ENCODE measurements at regions of chr6 and their contacts with region 1.

Region 1: GRCh38 chr6:84227434-84228197 is at the start of gene CEP162:
- DNase-seq: peak; percentile 92
- H3K4me3 Mint-ChIP-seq: peak within 1 kb of the TSS; percentile 100
- H3K27ac Mint-ChIP-seq: peak within 1 kb of the TSS; percentile 93
- H3K4me1 Mint-ChIP-seq: peaks cover 14% of the 10 kb centered on the region
- H3K27me3 Mint-ChIP-seq: peaks cover 6% of the 10 kb centered on the region
- total RNA-seq, gene CEP162: 5.4 to 6.3 TPM

Region 2: DNA sequence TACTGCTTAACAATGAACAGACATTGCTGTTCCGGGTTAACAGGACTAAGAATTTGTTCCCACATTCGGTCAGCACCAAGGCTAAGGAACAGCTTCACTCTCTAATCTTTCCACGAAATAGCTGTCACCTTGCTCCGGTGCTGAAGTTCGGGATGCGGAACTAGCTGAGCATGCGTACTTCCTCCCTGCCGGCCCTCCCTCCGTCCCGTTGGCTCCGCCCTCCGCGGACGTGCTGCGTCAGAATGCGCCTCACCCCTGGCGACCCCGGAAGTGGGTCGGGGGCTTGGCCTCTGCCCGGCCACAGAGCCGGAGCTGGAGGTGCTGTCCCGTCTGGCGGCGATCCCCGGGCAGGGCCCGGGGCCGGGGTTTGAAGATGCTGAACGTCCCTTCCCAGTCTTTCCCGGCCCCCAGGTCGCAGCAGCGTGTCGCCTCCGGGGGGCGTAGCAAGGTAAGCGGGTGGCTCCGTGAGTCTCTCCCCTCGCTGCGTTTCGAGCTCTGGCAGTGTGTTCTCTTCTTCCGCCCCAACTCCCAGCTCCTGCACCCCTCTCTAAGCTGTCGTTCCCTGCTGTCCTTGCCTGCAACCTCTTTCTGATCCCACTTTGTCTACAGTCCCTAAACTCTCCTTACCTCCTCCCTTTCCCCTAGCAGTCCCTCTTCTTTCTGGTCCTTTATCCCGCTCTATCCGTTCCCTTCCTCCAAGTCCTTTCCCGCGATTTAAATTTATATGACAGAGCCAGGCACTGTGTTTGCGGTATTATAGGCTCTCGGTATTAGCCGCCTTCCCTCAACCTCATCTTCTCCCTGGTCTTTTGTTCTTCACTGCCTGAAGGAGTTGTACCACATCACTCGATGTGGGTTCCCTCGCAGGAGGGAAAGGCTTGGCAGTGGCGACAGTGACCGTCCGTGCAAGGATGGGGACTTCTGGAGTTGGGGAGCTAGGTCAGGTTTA is 367.9 kb before region 1 on chr6 and contains the start of gene CYB5R4:
- CTCF ChIA-PET with region 1: interaction called, 20 read pairs
- POLR2A ChIA-PET with region 1: interaction called, 5 read pairs
- intact Hi-C with region 1: loop called (anchors 1 kb)
- DNase-seq: peak; percentile 97
- H3K4me3 Mint-ChIP-seq: peak within 1 kb of the TSS; percentile 99
- H3K27ac Mint-ChIP-seq: peak within 1 kb of the TSS; percentile 87
- H3K4me1 Mint-ChIP-seq: peaks cover 30% of the 10 kb centered on the region
- H3K27me3 Mint-ChIP-seq: peaks cover 12% of the 10 kb centered on the region
- total RNA-seq, gene CYB5R4: 26.2 to 29.8 TPM

Region 3: GRCh38 chr6:84033523-84034451 is 193.8 kb before region 1 on chr6 and contains the start of gene MRAP2:
- CTCF ChIA-PET with region 1: interaction called, 3 read pairs
- POLR2A ChIA-PET with region 1: no interaction called
- intact Hi-C with region 1: loop called (anchors 10 kb)
- DNase-seq: peak; percentile 13
- H3K4me3 Mint-ChIP-seq: no peak within 1 kb of the TSS
- H3K27ac Mint-ChIP-seq: no peak within 1 kb of the TSS
- H3K4me1 Mint-ChIP-seq: peaks cover 3% of the 10 kb centered on the region
- H3K27me3 Mint-ChIP-seq: peaks cover 48% of the 10 kb centered on the region
- total RNA-seq, gene MRAP2: not detected

Region 4: GRCh38 chr6:84399003-84399402 is 171.4 kb after region 1 on chr6:
- CTCF ChIA-PET with region 1: no interaction called
- POLR2A ChIA-PET with region 1: no interaction called
- intact Hi-C with region 1: no loop called
- DNase-seq: no peak
- H3K4me3 Mint-ChIP-seq: no peak overlapping the region
- H3K27ac Mint-ChIP-seq: no peak overlapping the region
- H3K4me1 Mint-ChIP-seq: no peaks in the 10 kb centered on the region
- H3K27me3 Mint-ChIP-seq: no peaks in the 10 kb centered on the region

Region 5: DNA sequence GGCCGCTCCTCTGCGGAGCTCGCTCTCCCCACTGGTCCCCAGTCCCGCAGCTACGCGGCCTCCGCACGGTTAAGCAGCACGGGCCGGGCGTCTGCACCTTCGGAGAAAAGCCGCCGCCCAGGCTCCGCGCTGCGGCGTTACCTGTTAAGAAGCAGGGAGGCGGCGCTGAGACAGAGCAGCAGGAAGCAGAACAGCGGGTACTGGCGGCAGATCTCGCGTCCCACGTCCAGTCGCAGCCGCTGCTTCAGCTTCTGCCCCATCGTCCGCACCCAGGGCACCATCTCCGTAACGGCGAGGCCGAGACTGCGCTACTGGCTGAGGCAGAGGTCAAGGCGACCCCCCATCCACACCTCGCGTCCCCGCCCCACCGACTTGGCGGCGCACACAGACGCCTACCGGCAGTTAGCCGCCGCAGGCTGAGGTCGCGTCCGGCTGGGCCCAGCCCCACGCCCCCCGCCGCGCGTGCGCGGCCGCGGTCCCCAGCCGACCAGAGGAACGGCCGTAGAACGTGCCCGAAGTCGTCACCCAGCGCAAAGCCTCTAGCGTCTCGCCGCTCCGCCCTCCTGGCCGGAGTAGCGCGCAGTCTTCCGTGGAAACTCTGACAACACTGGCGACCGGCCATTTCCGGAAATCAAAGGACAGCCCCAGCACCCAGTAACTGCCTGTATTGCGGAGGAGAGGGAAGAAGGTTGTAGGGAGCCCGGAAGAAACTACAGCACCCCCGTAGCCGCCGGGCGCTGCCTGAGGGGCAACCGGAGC is 1366.0 kb after region 1 on chr6 and contains the start of gene SNX14:
- CTCF ChIA-PET with region 1: no interaction called
- POLR2A ChIA-PET with region 1: no interaction called
- intact Hi-C with region 1: loop called (anchors 5 kb)
- DNase-seq: peak; percentile 90
- H3K4me3 Mint-ChIP-seq: peak within 1 kb of the TSS; percentile 84
- H3K27ac Mint-ChIP-seq: peak within 1 kb of the TSS; percentile 94
- H3K4me1 Mint-ChIP-seq: peaks cover 33% of the 10 kb centered on the region
- H3K27me3 Mint-ChIP-seq: no peaks in the 10 kb centered on the region
- total RNA-seq, gene SNX14: 50.9 to 59.6 TPM